A549 (cell line): ENCODE measurements at regions of chr15 and their contacts with region 1.

Region 1: DNA sequence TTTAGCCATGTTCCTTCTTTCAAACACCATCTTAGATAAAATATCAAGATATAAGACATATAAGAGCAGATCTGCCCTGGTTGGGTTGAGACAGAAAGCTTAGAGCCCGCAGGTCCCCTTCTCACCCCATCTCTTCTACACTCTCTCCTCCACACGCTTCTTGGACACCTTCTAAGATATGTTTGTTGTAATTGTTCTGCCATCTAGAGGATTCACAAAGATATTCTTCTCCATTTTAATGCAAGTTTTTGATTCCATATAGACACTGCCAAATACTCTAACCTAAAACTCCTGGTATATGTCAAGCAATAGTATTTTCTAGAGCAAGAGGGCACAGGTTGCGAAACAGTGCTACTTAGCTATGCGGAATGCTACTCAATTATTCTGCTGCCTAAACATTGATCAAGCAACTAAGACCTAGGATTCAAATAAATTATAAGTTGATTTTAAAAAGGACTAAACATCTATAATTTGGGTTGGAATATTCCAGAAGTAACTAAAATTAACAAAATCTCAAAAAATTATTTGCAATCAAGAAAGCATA is 6.8 kb downstream of the CHRM5 start:
- DNase-seq: peak in 1 of 2 experiments; percentile 14
- ATAC-seq: peak; percentile 44 to 73; a peak in 5 of 6 replicates
- H3K4me3 ChIP-seq: no peak overlapping the region
- H3K27ac ChIP-seq: no peak overlapping the region
- H3K4me1 ChIP-seq: no peaks in the 10 kb centered on the region
- CTCF ChIP-seq: peak; percentile 28; the same call in 2 of the 3 replicates
- EP300 ChIP-seq: no peak
- POLR2A ChIP-seq: no peak
- RAD21 ChIP-seq: 0 out of 5 replicates have a peak, but pooled peaks of 1 of the 2 experiments have one; percentile 34

Region 2: DNA sequence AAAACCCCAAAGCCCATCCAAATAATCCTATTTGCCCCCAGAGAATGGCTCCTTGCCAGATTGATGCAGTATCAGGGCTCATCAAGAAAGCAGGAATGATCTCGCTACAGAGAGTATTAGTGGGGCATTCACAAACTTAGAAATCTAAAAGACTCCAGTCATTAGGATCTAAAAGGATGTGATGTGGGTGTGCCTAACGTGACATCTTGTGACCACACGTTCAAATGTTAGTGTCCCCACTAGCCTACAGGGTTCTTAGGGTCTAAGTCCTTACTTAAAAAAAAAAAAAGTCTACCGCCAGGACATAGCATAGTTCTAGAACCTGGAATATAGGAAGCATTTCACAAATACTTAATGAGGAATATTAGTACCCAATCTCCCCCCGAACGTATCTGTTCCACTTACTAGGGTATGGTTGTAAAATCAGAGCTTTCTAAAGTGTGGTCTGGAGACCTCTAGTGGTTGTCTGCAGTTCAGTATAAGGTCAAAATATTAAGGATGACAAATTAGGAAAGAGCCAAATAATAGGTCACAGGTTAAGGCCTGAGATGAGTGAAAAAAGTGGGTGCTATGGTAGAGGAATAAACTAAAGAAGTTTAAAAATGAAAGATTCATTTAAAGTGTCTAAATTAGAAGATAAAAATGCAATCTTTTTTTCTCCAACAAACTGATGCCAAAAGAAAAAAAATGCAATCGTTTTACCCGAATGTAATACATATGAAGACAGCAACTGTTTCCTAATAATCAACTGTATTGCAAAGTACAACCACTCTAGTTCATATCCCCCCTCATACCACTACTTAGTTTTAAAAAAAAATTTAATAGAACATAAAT is 11.0 kb before region 1 on chr15:
- CTCF ChIA-PET with region 1: interaction called, 13 read pairs
- POLR2A ChIA-PET with region 1: interaction called, 3 read pairs
- DNase-seq: peak; percentile 24 to 49
- ATAC-seq: peak; percentile 88 to 94
- H3K4me3 ChIP-seq: no peak overlapping the region
- H3K27ac ChIP-seq: no peak overlapping the region
- H3K4me1 ChIP-seq: no peaks in the 10 kb centered on the region
- CTCF ChIP-seq: peak; percentile 85
- EP300 ChIP-seq: no peak
- POLR2A ChIP-seq: no peak
- RAD21 ChIP-seq: peak; percentile 71 to 79